Natural killer cell (primary cell): ENCODE measurements at regions of chr18 and their contacts with region 1.

Region 1: DNA sequence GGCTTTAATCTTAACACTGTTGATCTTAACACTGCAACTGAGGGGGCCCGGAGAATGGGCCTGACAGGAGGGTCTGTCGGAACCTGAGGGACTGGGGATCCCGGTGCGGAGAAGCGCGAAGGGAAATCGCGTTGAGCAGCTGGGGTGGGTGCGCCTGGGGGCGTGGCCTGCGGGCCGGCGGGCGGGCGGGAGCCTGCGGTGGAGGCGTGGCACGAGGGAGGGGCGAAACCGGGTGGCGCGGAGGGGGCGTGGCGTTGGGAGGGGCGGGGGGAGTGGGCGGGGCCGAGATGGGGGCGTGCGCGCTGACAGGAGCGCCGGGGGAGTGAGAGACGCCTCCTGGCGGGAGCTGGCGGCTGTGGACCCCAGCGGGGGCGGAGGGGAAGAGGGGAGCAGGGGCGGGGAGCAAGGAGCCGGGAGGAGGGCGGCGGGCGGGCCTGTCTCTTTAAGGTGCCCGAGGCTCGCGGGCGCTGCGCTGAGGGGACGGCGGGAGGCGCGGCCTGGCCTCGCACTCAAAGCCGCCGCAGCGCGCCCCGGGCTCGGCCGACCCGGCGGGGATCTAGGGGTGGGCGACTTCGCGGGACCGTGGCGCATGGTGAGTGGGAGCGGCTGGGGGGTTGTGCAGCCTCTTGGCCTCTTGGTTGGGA is at the start of gene TWSG1:
- DNase-seq: peak; percentile 84 to 95
- ATAC-seq: peak; percentile 81 to 94 (median 86)
- H3K4me3 ChIP-seq: peak within 1 kb of the TSS; percentile 44
- H3K4me3 Mint-ChIP-seq: peak within 1 kb of the TSS; percentile 95
- H3K27ac ChIP-seq: peak within 1 kb of the TSS; percentile 54
- H3K27ac Mint-ChIP-seq: peak within 1 kb of the TSS; percentile 82 to 87
- H3K4me1 ChIP-seq: peaks cover 9% of the 10 kb centered on the region
- H3K4me1 Mint-ChIP-seq: peaks cover 14 to 16% of the 10 kb centered on the region in 2 donors
- H3K27me3 ChIP-seq: no peaks in the 10 kb centered on the region
- H3K27me3 Mint-ChIP-seq: peaks cover 7 to 13% of the 10 kb centered on the region in 2 donors
- CTCF ChIP-seq: no peak
- total RNA-seq, gene TWSG1: 3.4 to 7.3 (median 5.6) TPM

Region 2: DNA sequence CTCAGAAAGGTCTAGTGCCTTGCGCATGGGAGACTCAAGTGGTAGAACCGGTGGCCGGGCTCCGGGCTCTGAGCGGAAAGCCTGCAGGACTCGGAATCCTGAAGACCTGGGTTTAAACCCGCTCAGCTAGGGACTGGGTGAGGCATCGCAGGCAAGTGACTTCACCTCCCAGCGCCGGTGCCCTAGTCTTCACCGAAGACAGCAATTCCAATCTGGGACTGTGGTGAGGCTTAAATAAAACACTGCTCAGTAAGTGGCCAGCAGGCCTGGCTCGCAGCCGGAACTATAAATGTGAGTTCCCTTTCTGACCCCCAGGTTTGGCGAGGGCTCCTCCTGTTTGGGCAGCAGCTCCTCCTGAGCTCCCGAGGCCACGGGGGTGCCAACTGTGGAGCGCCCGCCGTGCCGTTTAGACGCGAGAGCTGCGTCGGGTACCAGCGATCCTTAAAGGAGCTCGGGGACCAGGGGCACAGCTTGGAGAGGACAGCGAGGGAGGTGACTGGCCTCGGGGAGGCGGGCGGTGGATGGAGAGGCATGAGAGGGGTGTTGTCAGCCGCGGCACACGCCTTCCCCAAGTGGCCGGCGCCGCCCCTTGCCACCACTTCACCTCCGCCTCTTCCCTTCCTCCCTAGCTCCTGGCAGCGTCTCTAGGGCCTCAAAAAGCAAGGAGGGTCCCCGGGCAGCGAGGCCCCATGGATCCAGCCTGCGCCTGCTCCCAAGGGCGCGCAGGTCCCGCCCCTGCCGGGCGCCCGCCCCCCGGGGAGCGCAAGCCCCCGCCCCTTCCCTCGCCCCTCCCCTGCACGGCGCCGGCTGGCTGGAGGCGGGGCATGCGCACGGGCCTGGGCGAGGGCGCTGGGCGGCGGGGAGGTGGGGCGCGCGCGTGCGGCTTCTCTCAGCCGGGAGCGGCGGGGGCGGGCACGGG is 629.8 kb before region 1 on chr18:
- intact Hi-C with region 1: loop called (anchors 10 kb)
- DNase-seq: peak; percentile 75 to 91
- ATAC-seq: peak; percentile 93 to 96 (median 93)
- H3K4me3 ChIP-seq: peak overlapping the region; percentile 83
- H3K4me3 Mint-ChIP-seq: peak overlapping the region; percentile 93
- H3K27ac ChIP-seq: peak overlapping the region; percentile 29
- H3K27ac Mint-ChIP-seq: peak overlapping the region; percentile 26 to 71
- H3K4me1 ChIP-seq: peaks cover 25% of the 10 kb centered on the region
- H3K4me1 Mint-ChIP-seq: peaks cover 15 to 19% of the 10 kb centered on the region in 2 donors
- H3K27me3 ChIP-seq: peaks cover 35% of the 10 kb centered on the region
- H3K27me3 Mint-ChIP-seq: peaks cover 52 to 57% of the 10 kb centered on the region in 2 donors
- CTCF ChIP-seq: no peak

Region 3: DNA sequence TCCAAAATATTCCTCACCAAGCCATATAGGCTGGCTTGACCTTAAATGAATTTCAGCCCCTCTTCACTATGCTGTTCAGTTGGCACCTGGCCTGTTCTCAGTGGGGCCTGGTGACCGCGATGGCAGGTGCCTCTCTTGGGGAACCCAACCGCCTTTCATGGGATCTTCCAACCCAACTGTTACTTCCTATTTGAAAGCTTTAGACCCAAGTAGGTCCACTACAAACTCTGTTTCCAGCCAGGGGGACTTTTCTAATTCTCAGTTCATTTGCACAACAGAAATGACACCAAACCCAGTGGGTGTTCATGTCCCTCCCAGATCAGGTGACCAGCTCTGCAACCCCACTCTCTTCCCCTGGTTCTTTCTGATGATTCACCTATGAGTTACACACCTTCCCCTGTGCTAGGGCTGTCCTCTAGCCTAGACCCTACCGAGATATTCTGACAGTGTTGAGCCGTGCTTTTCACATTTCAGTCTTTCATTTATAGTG is 267.6 kb before region 1 on chr18:
- intact Hi-C with region 1: loop called (anchors 2 kb)
- DNase-seq: no peak
- ATAC-seq: peak in 1 of 3 donors; percentile 48
- H3K4me3 ChIP-seq: no peak overlapping the region
- H3K4me3 Mint-ChIP-seq: no peak overlapping the region
- H3K27ac ChIP-seq: no peak overlapping the region
- H3K27ac Mint-ChIP-seq: no peak overlapping the region
- H3K4me1 ChIP-seq: peaks cover 7% of the 10 kb centered on the region
- H3K4me1 Mint-ChIP-seq: peaks cover 0 to 4% of the 10 kb centered on the region in 2 donors
- H3K27me3 ChIP-seq: no peaks in the 10 kb centered on the region
- H3K27me3 Mint-ChIP-seq: peaks cover 0 to 8% of the 10 kb centered on the region in 2 donors
- CTCF ChIP-seq: no peak

Region 4: DNA sequence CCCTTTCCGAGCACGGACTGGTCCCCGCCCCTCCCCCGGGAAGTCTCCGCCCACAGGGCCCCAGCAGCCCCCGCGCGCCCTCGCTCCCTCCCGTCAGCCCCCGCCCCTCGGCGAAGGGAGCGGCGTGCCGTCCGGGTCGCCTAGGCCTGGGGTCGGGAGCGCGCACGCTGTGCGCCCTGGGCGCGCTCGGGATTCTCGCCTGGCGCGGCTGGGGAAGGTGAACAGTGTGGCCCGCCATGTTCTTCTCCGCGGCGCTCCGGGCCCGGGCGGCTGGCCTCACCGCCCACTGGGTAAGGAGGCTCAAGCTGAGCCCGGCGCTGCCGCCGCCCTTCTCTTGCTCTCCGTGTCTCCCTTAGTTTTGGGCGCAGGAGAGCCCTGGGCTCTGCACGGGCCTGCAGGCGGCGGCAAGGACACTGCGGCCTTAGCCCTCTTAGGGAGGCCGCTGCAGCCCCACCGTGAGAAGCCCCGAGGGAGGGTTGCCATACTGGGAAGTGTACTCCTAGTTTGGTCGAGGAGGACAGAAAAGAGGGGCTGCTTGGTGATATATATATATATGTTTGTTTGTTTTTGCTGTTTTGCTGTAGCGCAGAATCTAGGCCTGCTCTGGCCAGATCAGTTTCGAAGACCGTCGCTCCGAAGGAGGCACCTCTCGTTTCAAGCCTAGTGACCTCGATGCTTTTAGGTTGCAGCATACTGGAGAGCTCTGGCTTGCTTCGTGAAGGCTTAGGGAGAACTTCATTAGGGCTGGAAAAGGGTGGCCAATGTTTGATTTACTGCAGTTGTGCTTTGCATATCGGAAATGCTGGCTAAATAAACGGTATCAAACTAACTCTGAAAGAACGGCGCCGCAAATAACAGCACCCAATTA is 231.7 kb before region 1 on chr18 and contains the start of gene NDUFV2:
- intact Hi-C with region 1: loop called (anchors 1 kb)
- DNase-seq: peak; percentile 97 to 98
- ATAC-seq: peak; percentile 91 to 99 (median 93)
- H3K4me3 ChIP-seq: peak within 1 kb of the TSS; percentile 74
- H3K4me3 Mint-ChIP-seq: peak within 1 kb of the TSS; percentile 96
- H3K27ac ChIP-seq: peak within 1 kb of the TSS; percentile 90
- H3K27ac Mint-ChIP-seq: peak within 1 kb of the TSS; percentile 85 to 98
- H3K4me1 ChIP-seq: peaks cover 12% of the 10 kb centered on the region
- H3K4me1 Mint-ChIP-seq: peaks cover 61% of the 10 kb centered on the region in 2 donors
- H3K27me3 ChIP-seq: no peaks in the 10 kb centered on the region
- H3K27me3 Mint-ChIP-seq: no peaks in the 10 kb centered on the region
- CTCF ChIP-seq: no peak
- total RNA-seq, gene NDUFV2: 137 to 188 (median 154) TPM

Region 5: GRCh38 chr18:9136315-9137155 is 197.9 kb before region 1 on chr18 and contains the start of gene ANKRD12:
- intact Hi-C with region 1: loop called (anchors 2 kb)
- DNase-seq: peak; percentile 99
- ATAC-seq: peak; percentile 78 to 95 (median 82)
- H3K4me3 ChIP-seq: peak within 1 kb of the TSS; percentile 99
- H3K4me3 Mint-ChIP-seq: peak within 1 kb of the TSS; percentile 97
- H3K27ac ChIP-seq: peak within 1 kb of the TSS; percentile 96
- H3K27ac Mint-ChIP-seq: peak within 1 kb of the TSS; percentile 97 to 98
- H3K4me1 ChIP-seq: peaks cover 16% of the 10 kb centered on the region
- H3K4me1 Mint-ChIP-seq: peaks cover 47 to 58% of the 10 kb centered on the region in 2 donors
- H3K27me3 ChIP-seq: no peaks in the 10 kb centered on the region
- H3K27me3 Mint-ChIP-seq: no peaks in the 10 kb centered on the region
- CTCF ChIP-seq: no peak
- total RNA-seq, gene ANKRD12: 136 to 148 (median 141) TPM

Region 6: DNA sequence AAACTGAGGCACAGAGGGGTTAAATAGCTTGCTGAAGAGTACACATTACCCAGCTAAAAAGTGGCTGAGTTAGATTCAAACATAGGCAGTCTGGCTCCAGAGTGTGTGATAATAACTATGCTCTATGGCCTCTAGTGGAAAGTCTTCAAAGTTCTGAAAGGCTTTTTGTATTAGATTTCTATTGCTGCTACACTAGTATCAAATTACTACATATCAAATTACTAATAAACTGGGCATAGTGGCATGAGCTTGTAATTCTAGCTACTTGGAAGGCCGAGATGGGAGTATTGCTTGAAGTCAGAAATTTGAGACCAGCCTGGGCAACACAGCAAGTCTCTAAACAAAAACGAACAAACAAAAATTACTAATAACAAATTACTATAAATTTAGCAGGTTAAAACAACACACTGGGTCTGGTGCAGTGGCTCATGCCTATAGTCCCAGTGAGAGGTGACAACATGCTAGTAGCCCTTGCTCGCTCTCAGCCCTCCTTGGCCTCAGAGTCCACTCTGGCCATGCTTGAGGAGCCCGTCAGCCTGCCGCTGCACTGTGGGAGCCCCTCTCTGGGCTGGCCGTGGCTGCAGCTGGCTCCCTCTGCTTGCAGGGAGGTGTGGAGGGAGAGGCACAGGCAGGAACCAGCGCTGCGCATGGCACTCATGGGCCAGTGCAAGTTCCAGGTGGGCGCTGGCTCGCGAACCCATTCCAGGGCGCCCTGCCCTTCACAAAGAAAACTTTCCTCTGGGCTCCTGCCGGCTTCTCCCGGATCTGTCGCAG is 38.0 kb before region 1 on chr18:
- intact Hi-C with region 1: no loop called
- DNase-seq: no peak
- ATAC-seq: no peak
- H3K4me3 ChIP-seq: no peak overlapping the region
- H3K4me3 Mint-ChIP-seq: no peak overlapping the region
- H3K27ac ChIP-seq: no peak overlapping the region
- H3K27ac Mint-ChIP-seq: no peak overlapping the region
- H3K4me1 ChIP-seq: no peaks in the 10 kb centered on the region
- H3K4me1 Mint-ChIP-seq: no peaks in the 10 kb centered on the region
- H3K27me3 ChIP-seq: no peaks in the 10 kb centered on the region
- H3K27me3 Mint-ChIP-seq: no peaks in the 10 kb centered on the region
- CTCF ChIP-seq: no peak

Region 7: GRCh38 chr18:9474983-9475642 is 140.7 kb after region 1 on chr18 and contains the start of gene RALBP1:
- intact Hi-C with region 1: loop called (anchors 1 kb)
- DNase-seq: peak; percentile 96 to 98
- ATAC-seq: peak; percentile 96 to 100 (median 98)
- H3K4me3 ChIP-seq: peak within 1 kb of the TSS; percentile 79
- H3K4me3 Mint-ChIP-seq: peak within 1 kb of the TSS; percentile 99
- H3K27ac ChIP-seq: peak within 1 kb of the TSS; percentile 86
- H3K27ac Mint-ChIP-seq: peak within 1 kb of the TSS; percentile 88 to 98
- H3K4me1 ChIP-seq: peaks cover 23% of the 10 kb centered on the region
- H3K4me1 Mint-ChIP-seq: peaks cover 28 to 38% of the 10 kb centered on the region in 2 donors
- H3K27me3 ChIP-seq: peaks cover 4% of the 10 kb centered on the region
- H3K27me3 Mint-ChIP-seq: peaks cover 17 to 31% of the 10 kb centered on the region in 2 donors
- CTCF ChIP-seq: no peak
- total RNA-seq, gene RALBP1: 27.3 to 40.0 (median 33.4) TPM

Region 8: DNA sequence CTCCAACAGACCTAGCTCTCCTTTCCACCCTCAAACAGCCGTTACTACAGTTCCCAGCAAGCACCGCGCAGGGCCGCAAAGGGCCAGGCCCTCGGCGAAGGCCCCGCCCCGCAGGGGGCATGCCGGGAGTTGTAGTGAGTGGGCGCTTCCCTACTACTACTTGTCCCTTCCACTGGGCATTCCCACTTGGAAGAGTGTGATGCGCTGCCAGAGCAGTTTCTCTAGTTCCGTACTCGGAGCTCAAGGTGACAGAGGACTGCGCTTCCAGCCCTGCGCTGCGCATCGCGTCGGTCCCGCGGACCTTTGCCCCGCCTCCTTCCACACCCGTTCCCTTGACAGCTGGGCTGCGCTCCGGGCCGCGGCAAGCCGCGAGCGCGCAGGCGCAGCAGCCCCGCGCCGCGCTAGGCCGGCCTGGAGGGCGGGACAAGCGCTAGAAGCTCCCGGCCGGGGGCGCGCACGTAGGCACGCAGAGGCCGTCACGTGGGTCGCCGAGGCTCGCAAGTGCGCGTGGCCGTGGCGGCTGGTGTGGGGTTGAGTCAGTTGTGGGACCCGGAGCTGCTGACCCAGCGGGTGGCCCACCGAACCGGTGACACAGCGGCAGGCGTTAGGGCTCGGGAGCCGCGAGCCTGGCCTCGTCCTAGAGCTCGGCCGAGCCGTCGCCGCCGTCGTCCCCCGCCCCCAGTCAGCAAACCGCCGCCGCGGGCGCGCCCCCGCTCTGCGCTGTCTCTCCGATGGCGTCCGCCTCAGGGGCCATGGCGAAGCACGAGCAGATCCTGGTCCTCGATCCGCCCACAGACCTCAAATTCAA is 579.3 kb after region 1 on chr18 and contains the start of gene VAPA:
- intact Hi-C with region 1: loop called (anchors 10 kb)
- DNase-seq: peak; percentile 92 to 99
- ATAC-seq: peak; percentile 83 to 94 (median 84)
- H3K4me3 ChIP-seq: peak within 1 kb of the TSS; percentile 88
- H3K4me3 Mint-ChIP-seq: peak within 1 kb of the TSS; percentile 90
- H3K27ac ChIP-seq: peak within 1 kb of the TSS; percentile 96
- H3K27ac Mint-ChIP-seq: peak within 1 kb of the TSS; percentile 91
- H3K4me1 ChIP-seq: peaks cover 8% of the 10 kb centered on the region
- H3K4me1 Mint-ChIP-seq: peaks cover 26 to 27% of the 10 kb centered on the region in 2 donors
- H3K27me3 ChIP-seq: no peaks in the 10 kb centered on the region
- H3K27me3 Mint-ChIP-seq: peaks cover 7 to 20% of the 10 kb centered on the region in 2 donors
- CTCF ChIP-seq: no peak
- total RNA-seq, gene VAPA: 175 to 186 (median 182) TPM